A549 (cell line): ENCODE measurements at regions of chr17 and their contacts with region 1.

Region 1: DNA sequence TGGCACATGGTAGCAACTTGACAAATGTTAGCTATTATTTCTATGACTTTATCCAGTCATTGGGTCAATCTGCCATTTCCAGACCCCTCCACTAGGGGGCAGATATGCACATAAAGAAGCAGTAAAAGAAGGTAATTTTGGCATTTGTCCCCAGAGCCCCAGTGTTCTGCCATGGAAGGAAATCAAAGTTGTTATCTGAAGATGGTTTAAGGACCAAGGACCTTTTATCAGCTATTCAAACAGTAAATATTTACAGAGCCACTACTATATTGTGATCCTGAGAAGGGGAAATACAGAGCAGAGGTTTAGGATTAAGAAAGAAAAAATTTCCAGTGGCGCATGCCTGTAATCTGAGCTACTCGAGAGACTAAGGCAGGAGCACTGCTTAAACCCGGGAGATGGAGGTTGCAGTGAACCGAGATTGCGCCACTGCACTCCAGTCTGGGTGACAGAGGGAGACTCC is 20.0 kb downstream of the TRAF4 start:
- DNase-seq: peak; percentile 78 to 81
- ATAC-seq: peak; percentile 51 to 69; a peak in 5 of 6 replicates
- H3K4me3 ChIP-seq: no peak overlapping the region
- H3K27ac ChIP-seq: no peak overlapping the region
- H3K4me1 ChIP-seq: peaks cover 15% of the 10 kb centered on the region
- CTCF ChIP-seq: peak; percentile 97
- EP300 ChIP-seq: no peak
- POLR2A ChIP-seq: no peak
- RAD21 ChIP-seq: peak; percentile 87 to 89

Region 2: GRCh38 chr17:28726226-28727130 is 37.4 kb before region 1 on chr17 and contains the start of gene TLCD1:
- CTCF ChIA-PET with region 1: interaction called, 977 read pairs
- POLR2A ChIA-PET with region 1: interaction called, 13 read pairs
- DNase-seq: peak; percentile 73 to 92
- ATAC-seq: peak; percentile 44 to 56
- H3K4me3 ChIP-seq: peak within 1 kb of the TSS; percentile 63
- H3K27ac ChIP-seq: peak within 1 kb of the TSS; percentile 94 to 98
- H3K4me1 ChIP-seq: peaks cover 46% of the 10 kb centered on the region
- CTCF ChIP-seq: peak; percentile 100
- EP300 ChIP-seq: no peak
- POLR2A ChIP-seq: no peak
- RAD21 ChIP-seq: peak; percentile 100
- polyA plus RNA-seq, gene TLCD1: 83.3 and 86.7 TPM in 2 replicates

Region 3: GRCh38 chr17:28783161-28783560 is 19.3 kb after region 1 on chr17:
- CTCF ChIA-PET with region 1: interaction called, 32 read pairs
- POLR2A ChIA-PET with region 1: no interaction called
- DNase-seq: no peak
- ATAC-seq: no peak
- H3K4me3 ChIP-seq: no peak overlapping the region
- H3K27ac ChIP-seq: no peak overlapping the region
- H3K4me1 ChIP-seq: no peaks in the 10 kb centered on the region
- CTCF ChIP-seq: no peak
- EP300 ChIP-seq: no peak
- POLR2A ChIP-seq: no peak
- RAD21 ChIP-seq: no peak

Region 4: GRCh38 chr17:28828294-28829040 is 64.6 kb after region 1 on chr17:
- CTCF ChIA-PET with region 1: interaction called, 31 read pairs
- POLR2A ChIA-PET with region 1: interaction called, 3 read pairs
- DNase-seq: no peak
- ATAC-seq: no peak; a peak in 1 of 6 replicates
- H3K4me3 ChIP-seq: no peak overlapping the region
- H3K27ac ChIP-seq: no peak overlapping the region
- H3K4me1 ChIP-seq: no peaks in the 10 kb centered on the region
- CTCF ChIP-seq: no peak
- EP300 ChIP-seq: no peak
- POLR2A ChIP-seq: no peak
- RAD21 ChIP-seq: no peak

Region 5: DNA sequence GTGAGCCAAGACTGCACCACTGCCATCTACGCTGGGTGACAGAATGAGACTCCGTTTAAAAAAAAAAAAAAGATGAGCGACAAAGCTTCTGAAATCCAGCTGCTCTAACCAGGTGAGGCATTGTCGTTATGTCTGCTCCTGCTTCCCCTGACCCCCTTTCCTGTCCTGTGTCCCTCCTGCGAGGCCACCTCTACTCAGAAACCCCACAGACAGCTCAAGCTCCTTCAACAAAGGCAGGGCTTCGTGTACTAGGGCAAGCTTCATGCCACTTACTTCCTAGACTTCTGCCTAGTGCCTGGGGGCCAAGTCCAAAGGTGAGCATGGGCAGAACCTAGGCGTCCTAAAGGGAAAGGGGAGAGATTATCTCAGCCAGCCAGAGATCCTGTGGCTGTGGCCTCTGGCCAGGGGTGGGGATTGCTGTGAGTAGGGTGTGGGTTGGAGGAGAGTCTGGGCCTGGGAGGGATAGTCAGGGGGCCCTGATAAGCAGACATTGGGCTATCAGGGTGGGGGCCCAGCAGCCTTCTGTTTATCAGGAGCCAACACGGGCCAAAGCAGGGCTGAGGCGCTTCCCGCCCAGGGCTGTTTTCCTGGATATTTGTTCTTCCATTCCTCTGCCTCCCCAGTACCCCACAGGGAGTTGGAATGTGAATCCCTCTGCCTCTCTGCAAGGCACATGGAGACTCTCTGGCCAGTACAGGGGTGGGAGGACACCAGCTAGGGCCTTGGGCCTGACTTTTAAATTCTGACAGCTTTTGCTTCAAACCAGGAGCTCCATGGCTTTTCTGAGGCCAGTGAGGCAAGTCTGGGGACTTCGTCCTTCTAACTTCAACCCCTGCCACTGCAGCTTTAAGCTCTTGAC is 101.4 kb after region 1 on chr17:
- CTCF ChIA-PET with region 1: interaction called, 58 read pairs
- POLR2A ChIA-PET with region 1: no interaction called
- DNase-seq: no peak
- ATAC-seq: no peak; a peak in 1 of 6 replicates
- H3K4me3 ChIP-seq: no peak overlapping the region
- H3K27ac ChIP-seq: no peak overlapping the region
- H3K4me1 ChIP-seq: no peaks in the 10 kb centered on the region
- CTCF ChIP-seq: no peak
- EP300 ChIP-seq: no peak
- POLR2A ChIP-seq: no peak
- RAD21 ChIP-seq: no peak

Region 6: GRCh38 chr17:28902819-28903545 is 139.1 kb after region 1 on chr17 and contains the start of gene DHRS13:
- CTCF ChIA-PET with region 1: interaction called, 493 read pairs
- POLR2A ChIA-PET with region 1: no interaction called
- DNase-seq: peak; percentile 97
- ATAC-seq: peak; percentile 91 to 94
- H3K4me3 ChIP-seq: peak within 1 kb of the TSS; percentile 87
- H3K27ac ChIP-seq: peak within 1 kb of the TSS; percentile 76 to 84
- H3K4me1 ChIP-seq: peaks cover 10% of the 10 kb centered on the region
- CTCF ChIP-seq: peak; percentile 100
- EP300 ChIP-seq: no peak
- POLR2A ChIP-seq: no peak
- RAD21 ChIP-seq: peak; percentile 63 to 70
- polyA plus RNA-seq, gene DHRS13: 7.0 and 7.3 TPM in 2 replicates